Naive thymus-derived CD8-positive, alpha-beta T cell (primary cell): ENCODE measurements at regions of chr3 and their contacts with region 1.

Region 1: GRCh38 chr3:156554842-156555687 is at the start of gene SSR3:
- DNase-seq: peak; percentile 92 to 99 (median 98)
- ATAC-seq: peak; percentile 98
- H3K4me3 Mint-ChIP-seq: peak within 1 kb of the TSS; percentile 92 to 99 (median 96)
- H3K27ac Mint-ChIP-seq: peak within 1 kb of the TSS; percentile 88 to 98 (median 96)
- H3K4me1 Mint-ChIP-seq: peaks cover 22 to 56% (median 42%) of the 10 kb centered on the region in 4 donors
- H3K27me3 Mint-ChIP-seq: peaks cover 0 to 1% (median 0%) of the 10 kb centered on the region in 5 donors
- polyA plus RNA-seq, gene SSR3: 81.7 to 93.9 (median 86.3) TPM

Region 2: DNA sequence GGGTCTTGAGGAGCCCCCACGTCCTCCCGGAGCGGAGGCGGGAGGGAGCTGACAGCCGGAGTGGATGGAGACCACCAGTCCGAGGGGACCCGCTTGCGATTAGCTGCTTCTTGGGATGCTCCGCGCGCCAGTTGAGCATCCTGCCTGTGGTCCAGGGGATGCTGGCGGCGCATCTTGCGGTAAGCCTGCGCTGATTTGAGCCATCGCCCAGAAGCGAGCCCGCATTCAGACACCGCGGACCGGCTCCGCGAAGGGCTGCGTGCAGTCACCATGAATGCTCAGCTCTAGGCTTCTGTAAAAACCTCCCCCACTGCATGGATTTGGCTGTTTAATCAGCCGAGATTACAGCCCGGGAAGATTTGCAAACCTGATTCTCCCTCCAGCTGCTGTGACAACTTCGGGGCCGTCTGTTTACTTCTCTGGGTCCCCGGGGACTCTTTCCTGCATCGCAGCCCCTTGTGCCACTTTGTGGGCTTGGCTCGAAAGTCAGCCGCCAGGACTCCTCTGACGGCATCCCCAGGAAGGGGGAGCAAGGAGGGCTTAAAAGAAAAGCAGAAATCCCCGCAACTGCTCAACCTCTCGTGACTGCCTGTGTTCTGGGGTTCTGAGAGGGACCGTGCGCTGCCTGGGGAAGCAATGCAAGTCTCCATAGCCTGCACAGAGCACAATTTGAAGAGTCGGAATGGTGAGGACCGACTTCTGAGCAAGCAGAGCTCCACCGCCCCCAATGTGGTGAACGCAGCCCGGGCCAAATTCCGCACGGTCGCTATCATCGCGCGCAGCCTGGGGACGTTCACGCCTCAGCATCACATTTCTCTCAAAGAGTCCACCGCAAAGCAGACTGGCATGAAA is 263.6 kb before region 1 on chr3:
- POLR2A ChIA-PET with region 1: no interaction called
- DNase-seq: peak in 7 of 10 donors; percentile 6 to 63 (median 30)
- ATAC-seq: peak; percentile 72 to 84
- H3K4me3 Mint-ChIP-seq: peak overlapping the region in 9 of 10 donors; percentile 12 to 73 (median 56)
- H3K27ac Mint-ChIP-seq: peak overlapping the region in 1 of 10 donors; percentile 66
- H3K4me1 Mint-ChIP-seq: peaks cover 0 to 10% (median 4%) of the 10 kb centered on the region in 4 donors
- H3K27me3 Mint-ChIP-seq: peaks cover 37 to 91% (median 46%) of the 10 kb centered on the region in 5 donors

Region 3: GRCh38 chr3:156535162-156535627 is 19.9 kb before region 1 on chr3:
- POLR2A ChIA-PET with region 1: no interaction called
- DNase-seq: no peak
- ATAC-seq: no peak
- H3K4me3 Mint-ChIP-seq: no peak overlapping the region
- H3K27ac Mint-ChIP-seq: peak overlapping the region in 2 of 10 donors; percentile 58 to 78
- H3K4me1 Mint-ChIP-seq: peaks cover 0 to 10% (median 0%) of the 10 kb centered on the region in 4 donors
- H3K27me3 Mint-ChIP-seq: no peaks in the 10 kb centered on the region

Region 4: GRCh38 chr3:156576651-156577343 is 21.7 kb after region 1 on chr3:
- POLR2A ChIA-PET with region 1: no interaction called
- DNase-seq: no peak
- ATAC-seq: no peak
- H3K4me3 Mint-ChIP-seq: no peak overlapping the region
- H3K27ac Mint-ChIP-seq: no peak overlapping the region
- H3K4me1 Mint-ChIP-seq: peaks cover 0 to 1% (median 0%) of the 10 kb centered on the region in 4 donors
- H3K27me3 Mint-ChIP-seq: peaks cover 14 to 31% (median 16%) of the 10 kb centered on the region in 5 donors

Region 5: DNA sequence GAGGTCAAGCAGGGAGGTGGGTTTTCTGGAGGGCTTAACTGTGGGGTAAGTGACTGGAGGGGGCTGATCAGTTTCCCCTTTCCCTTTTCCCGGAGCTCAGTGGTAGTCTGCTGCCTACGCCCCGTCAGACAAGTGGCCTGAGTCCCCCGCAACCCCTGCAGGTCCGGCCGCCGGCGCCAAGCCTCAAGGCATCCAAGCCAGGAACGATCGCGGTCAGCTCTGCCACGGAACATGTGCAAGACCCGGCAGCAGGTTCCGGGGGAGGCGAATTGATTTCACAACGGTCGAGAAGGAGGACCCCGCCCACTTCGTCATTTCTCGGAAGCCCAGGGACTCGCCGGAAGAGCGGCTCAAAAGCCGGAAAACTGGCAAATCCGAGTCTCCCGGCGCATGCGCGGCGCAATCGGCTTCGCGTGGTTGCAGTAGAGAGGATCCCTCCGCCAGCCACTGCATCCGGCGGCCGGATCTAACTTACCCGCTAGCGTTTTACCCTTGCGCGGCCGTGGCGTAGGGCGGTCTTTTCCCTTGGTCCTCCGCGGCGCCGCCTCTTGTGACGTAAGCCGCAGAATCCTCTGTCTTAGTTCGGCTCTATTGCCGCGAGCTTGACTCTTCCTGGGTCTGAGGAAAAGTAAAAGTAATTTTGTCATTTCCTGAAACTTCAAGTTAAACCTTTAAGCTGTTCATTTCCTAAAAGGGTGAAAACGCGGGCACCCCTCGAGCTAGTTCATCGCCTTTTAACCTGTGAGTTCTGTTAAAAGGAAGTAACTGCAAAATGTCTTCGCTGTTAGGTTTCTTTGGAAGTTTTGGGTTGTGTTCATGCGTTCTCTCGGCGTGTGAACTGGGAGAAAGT is 619.8 kb after region 1 on chr3:
- POLR2A ChIA-PET with region 1: interaction called, 16 read pairs
- DNase-seq: peak; percentile 91 to 99 (median 98)
- ATAC-seq: peak; percentile 91 to 93
- H3K4me3 Mint-ChIP-seq: peak overlapping the region; percentile 81 to 98 (median 94)
- H3K27ac Mint-ChIP-seq: peak overlapping the region; percentile 95 to 99 (median 98)
- H3K4me1 Mint-ChIP-seq: peaks cover 12 to 44% (median 33%) of the 10 kb centered on the region in 4 donors
- H3K27me3 Mint-ChIP-seq: peaks cover 0 to 3% (median 0%) of the 10 kb centered on the region in 5 donors